ENCODE measurements at regions of chr22 and their contacts with region 1.

Region 1: DNA sequence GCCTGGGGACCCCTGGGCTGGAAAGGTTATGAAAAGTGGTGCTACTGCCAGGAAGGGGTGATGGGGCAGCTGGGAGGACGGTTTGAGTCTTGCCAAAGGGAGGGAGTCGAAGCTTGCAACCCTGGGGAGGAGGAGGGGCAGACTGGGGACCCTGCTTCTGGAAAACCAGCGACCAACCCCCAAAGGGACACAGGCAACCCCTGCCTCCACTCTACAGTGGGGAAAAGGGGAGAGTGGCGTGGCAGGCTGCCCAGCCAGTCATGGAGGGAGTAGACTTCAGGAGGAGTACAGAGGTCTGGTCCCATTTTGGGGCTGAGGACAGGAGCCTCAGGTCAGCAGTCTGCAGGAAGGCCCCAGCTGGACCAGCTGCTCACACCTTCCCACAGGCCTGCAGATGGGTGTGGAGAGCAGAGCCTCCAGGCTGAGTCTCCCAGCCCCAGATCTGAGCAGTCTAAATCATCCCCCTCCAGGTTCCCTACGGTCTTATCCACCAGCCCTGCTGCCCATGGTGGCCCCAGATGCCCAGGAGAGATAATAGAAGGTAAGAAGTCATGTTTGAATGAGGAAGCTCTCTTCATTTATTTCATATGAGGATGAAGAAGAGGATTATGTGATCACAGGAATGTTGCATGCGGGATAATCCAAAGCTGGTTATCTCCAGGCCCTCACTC is 3.3 kb downstream of the DDT start:
- DNase-seq: peak in 1 of 2 donors; percentile 2
- H3K4me3 ChIP-seq: no peak overlapping the region
- H3K27ac ChIP-seq: peak overlapping the region in 1 of 5 donors; percentile 4
- H3K4me1 ChIP-seq: peaks cover 0 to 30% (median 13%) of the 10 kb centered on the region in 4 donors
- H3K27me3 ChIP-seq: no peaks in the 10 kb centered on the region
- CTCF ChIP-seq: no peak
- EP300 ChIP-seq: no peak
- POLR2A ChIP-seq: no peak

Region 2: DNA sequence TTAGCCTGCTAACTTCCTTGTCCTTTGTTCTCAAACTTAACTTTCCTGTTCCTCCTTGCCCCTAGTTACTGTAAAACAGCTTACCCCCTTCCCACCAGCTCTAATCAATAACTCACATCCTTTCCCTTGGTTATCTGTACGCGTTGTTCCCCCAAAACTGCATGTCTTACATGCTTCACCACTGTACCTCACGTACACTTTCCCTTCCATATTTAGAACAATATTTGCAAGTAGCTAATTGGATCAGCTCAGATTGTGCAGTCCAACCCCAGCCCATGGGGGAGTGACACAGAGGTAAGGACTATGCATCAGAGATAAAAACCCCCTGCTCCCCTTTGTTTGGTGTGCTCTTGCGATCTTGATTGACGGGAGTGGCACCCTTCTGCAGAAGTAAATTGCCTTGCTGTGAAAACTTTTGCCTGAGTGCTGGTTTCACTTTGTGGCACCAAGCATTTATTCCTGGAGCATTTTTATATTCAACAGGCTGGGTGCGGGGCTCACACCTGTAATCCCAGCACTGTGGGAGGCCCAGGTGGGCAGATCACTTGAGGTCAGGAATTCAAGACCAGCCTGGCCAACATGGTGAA is 45.8 kb before region 1 on chr22:
- intact Hi-C with region 1: loop called (anchors 5 kb)
- DNase-seq: no peak
- H3K4me3 ChIP-seq: no peak overlapping the region
- H3K27ac ChIP-seq: no peak overlapping the region
- H3K4me1 ChIP-seq: no peaks in the 10 kb centered on the region
- H3K27me3 ChIP-seq: no peaks in the 10 kb centered on the region
- CTCF ChIP-seq: no peak
- EP300 ChIP-seq: no peak
- POLR2A ChIP-seq: no peak